ENCODE measurements at regions of chr11 and their contacts with region 1.

Region 1: DNA sequence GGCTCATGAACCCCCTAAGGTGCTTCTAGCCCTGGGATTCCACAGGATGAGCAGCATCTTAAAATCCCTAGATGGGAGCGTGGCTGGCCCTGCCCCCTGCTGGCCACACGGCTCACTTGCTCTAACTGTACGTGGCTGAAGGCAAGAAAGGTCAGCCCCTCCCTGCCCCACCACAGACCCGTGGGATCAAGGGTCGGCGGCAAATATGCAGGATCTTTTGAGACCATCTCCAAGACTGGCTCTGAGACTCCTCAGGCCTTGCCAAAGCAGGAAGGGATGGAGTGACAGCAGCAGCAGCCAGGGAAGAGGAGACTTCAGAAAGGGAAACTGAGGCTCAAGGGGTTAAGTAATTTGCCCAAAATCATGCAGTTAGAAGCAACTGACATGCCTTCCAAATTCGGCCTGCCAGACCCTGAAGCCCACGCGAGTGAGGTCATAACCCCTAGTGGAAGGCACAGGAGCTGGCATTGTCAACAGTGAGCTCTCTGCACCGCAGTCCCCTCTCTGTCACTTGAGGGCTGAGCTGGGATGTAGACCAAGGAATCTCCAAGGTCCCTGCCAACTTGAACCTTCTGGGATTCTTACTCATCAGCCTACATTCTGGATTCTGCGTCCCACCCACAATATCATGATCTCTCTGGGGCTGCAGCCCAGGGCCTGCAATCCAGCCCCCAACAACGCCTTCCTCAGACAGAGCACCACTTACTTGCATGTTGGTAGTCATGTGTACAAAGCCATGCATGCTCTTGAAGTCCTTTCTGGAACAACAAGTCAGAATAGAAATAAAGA is 31.4 kb downstream of the CREB3L1 start:
- DNase-seq: no peak
- H3K4me3 ChIP-seq: no peak overlapping the region
- CTCF ChIP-seq: peak; percentile 86

Region 2: DNA sequence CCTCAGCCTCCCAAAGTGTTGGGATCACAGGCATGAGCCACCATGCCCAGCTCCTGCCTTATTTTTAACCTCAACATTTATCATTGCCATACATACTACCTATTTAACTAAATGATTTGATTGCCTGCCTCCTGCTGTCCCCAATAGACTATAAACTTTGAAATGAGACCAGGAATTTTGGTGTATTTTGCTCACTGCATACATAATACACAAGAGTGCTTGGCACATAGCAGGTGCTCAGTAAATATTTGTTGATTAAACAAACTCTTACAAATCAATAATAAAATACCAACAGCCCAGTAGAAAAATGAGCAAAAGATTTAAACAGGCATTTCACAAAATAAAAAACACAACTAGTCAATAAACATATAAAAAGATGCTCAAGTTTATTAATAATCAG is 138.0 kb before region 1 on chr11:
- CTCF ChIA-PET with region 1: no interaction called
- POLR2A ChIA-PET with region 1: no interaction called
- DNase-seq: no peak
- H3K4me3 ChIP-seq: no peak overlapping the region
- CTCF ChIP-seq: no peak

Region 3: DNA sequence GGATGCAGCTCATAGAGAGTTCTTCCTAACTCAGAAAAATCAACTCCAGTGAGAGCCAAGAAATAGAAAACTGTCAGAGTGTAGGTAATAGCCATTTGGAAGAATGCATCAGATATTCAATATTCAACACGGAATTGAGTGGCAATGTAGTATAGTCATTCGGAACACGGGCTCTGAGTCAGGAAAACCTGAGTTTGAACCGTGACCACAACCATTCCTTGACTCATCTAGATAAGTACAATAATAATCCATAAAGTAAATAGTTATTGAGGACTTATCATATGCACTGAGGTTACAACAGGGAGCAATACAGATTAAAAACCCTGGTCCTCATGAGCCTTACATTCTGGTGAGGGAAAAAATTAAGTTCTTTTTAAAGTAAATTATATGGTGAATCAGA is 125.0 kb before region 1 on chr11:
- CTCF ChIA-PET with region 1: no interaction called
- POLR2A ChIA-PET with region 1: no interaction called
- DNase-seq: no peak
- H3K4me3 ChIP-seq: no peak overlapping the region
- CTCF ChIP-seq: no peak

Region 4: DNA sequence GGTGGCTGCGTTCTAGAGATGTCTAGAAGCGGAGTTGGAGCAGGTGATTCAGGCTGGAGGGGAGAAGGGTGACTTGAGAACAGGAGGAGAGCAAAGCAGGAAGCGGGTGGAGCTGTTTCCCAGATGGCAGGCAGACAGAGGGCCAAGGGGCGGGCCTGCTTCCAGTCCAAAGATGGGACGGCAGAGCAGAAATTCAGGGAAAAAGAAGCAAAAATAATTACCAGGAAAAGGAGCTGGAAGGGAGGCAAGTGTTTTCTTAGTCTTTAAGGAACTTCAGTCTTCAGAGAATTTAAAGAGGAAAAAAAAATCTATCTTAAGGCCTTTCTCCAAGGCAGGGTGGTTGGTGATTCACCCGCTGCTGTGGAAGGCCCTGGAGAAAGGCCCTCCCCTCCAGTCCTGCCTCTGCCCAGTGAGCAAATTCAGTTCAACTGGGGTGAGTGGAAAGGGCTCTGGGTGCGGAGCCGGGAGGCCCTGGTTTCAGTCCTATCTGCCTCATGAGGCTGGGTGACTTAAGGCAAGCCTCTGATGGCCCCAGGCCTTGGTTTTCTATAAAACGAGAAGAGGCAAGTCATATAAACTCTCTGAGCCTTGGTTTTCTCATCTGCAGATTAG is 35.9 kb before region 1 on chr11:
- CTCF ChIA-PET with region 1: interaction called, 96 read pairs
- POLR2A ChIA-PET with region 1: interaction called, 3 read pairs
- DNase-seq: no peak
- H3K4me3 ChIP-seq: no peak overlapping the region
- CTCF ChIP-seq: no peak

Region 5: GRCh38 chr11:46278387-46279125 is 30.3 kb before region 1 on chr11:
- CTCF ChIA-PET with region 1: interaction called, 96 read pairs
- POLR2A ChIA-PET with region 1: interaction called, 3 read pairs
- DNase-seq: no peak
- H3K4me3 ChIP-seq: peak overlapping the region; percentile 95
- CTCF ChIP-seq: peak; percentile 90

Region 6: GRCh38 chr11:46285594-46286033 is 23.2 kb before region 1 on chr11:
- CTCF ChIA-PET with region 1: interaction called, 96 read pairs
- POLR2A ChIA-PET with region 1: no interaction called
- DNase-seq: no peak
- H3K4me3 ChIP-seq: no peak overlapping the region; the same call in 1 of the 2 replicates
- CTCF ChIP-seq: no peak

Region 7: GRCh38 chr11:46322759-46323158 is 13.9 kb after region 1 on chr11:
- CTCF ChIA-PET with region 1: interaction called, 35 read pairs
- POLR2A ChIA-PET with region 1: no interaction called
- DNase-seq: no peak
- H3K4me3 ChIP-seq: no peak overlapping the region
- CTCF ChIP-seq: peak; percentile 65

Measured in AG04449 (cell line).